ENCODE measurements at regions of chr3 and their contacts with region 1.

Region 1: DNA sequence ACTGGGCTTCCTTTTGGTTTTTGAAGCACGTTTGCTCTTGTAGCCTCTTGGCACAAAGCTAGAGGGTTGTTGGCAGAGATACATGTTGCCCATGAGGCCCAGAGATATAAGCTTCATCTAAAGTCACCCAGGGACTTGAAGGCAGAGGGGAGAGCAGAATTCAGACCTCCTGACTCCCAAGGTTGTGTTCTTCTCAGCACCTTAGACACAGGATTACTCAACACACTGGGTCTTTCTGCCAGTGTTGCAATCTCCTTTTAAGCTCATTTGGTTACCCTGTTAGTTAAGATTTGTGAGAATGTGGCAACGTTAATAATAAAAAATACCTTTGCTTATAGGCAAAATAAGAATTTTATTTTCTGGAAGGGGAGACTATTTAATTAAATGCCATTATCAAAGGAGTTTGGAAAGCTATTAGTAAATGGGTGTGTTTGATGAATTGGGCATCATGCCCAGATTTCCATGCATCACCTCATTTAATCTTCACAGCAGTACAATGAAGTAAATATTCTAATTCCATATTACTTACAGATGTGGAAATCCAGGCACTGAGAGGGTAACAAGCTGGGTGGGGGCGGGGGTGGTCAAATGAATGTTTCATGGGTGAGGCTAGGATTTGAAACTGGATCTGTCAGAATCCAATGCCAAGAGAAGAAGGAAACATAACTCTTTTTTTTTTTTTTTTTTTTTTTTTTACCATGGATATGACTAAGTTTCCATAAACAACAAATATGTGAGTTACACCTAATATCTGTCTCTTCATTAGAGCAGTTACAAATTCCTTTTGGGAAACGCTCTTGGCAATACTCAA is 183.3 kb downstream of the NR1D2 start:
- DNase-seq: no peak
- H3K4me3 ChIP-seq: no peak overlapping the region
- H3K27ac ChIP-seq: no peak overlapping the region
- H3K4me1 ChIP-seq: no peaks in the 10 kb centered on the region
- H3K27me3 ChIP-seq: no peaks in the 10 kb centered on the region
- CTCF ChIP-seq: no peak
- POLR2A ChIP-seq: no peak

Region 2: GRCh38 chr3:24042174-24043059 is 86.0 kb before region 1 on chr3:
- intact Hi-C with region 1: loop called (anchors 5 kb)
- DNase-seq: peak; percentile 42
- H3K4me3 ChIP-seq: no peak overlapping the region
- H3K27ac ChIP-seq: peak overlapping the region; percentile 50 to 58
- H3K4me1 ChIP-seq: no peaks in the 10 kb centered on the region
- H3K27me3 ChIP-seq: no peaks in the 10 kb centered on the region
- CTCF ChIP-seq: no peak
- POLR2A ChIP-seq: no peak